Activated naive CD4-positive, alpha-beta T cell treated with anti-CD3 and anti-CD28 coated beads for 36 hours (primary cell): ENCODE measurements at regions of chr17 and their contacts with region 1.

Region 1: DNA sequence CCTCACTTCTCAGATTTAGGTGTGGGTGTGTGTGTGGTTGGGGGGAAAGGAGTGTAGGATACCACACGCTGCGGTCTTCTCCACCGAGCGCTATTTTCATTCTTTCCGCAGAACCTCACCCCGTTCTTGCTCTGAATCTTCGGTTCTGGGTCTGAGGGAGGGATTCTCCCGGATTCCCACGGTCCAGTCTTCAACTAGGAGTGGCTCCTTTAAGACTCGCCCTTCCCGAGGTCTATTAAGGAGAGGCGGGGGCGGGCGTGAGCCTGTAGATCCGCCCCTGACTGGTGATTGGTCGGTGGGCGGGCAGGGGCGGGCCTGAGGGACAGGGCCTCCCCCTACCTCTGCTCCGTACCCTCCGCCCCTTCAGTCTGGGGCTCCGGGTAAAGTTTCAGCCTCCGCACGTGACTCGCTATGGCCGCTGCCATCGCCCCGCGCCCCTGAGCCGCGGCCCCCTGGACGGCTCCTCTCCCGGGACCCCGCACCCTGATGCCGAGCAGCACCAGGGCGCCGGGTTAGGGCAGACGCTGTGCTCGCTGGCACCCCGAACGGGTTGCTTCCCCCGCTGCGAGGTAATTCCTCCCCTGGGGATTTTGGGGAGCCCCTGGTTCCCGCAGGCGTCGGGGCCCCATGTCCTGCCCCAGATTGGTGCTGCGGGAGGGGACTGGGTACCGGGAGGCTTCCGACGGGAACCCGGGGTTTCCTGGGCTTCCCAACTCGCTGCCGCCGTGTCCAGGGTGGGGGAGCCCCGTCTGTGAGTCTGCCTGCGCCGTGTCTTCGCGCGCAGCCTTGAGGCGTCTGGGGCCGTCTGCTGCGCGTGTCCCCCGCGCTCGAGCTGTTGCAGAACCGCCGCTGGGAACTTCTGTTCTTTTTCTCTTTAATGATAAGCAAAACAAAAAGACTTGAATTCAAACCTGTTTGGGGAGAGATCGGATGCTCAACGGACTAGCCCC is 9.2 kb downstream of the RARA start:
- DNase-seq: peak; percentile 94
- H3K4me3 Mint-ChIP-seq: peak overlapping the region; percentile 85
- H3K27ac Mint-ChIP-seq: peak overlapping the region; percentile 90
- H3K4me1 Mint-ChIP-seq: peaks cover 75% of the 10 kb centered on the region
- H3K27me3 Mint-ChIP-seq: no peaks in the 10 kb centered on the region

Region 2: GRCh38 chr17:40219073-40219860 is 98.9 kb before region 1 on chr17 and contains the start of gene WIPF2:
- CTCF ChIA-PET with region 1: interaction called, 3 read pairs
- intact Hi-C with region 1: loop called (anchors 1 kb)
- DNase-seq: peak; percentile 99
- H3K4me3 Mint-ChIP-seq: peak within 1 kb of the TSS; percentile 82
- H3K27ac Mint-ChIP-seq: peak within 1 kb of the TSS; percentile 95
- H3K4me1 Mint-ChIP-seq: peaks cover 24% of the 10 kb centered on the region
- H3K27me3 Mint-ChIP-seq: no peaks in the 10 kb centered on the region
- total RNA-seq, gene WIPF2: 12.3 to 13.0 TPM

Region 3: DNA sequence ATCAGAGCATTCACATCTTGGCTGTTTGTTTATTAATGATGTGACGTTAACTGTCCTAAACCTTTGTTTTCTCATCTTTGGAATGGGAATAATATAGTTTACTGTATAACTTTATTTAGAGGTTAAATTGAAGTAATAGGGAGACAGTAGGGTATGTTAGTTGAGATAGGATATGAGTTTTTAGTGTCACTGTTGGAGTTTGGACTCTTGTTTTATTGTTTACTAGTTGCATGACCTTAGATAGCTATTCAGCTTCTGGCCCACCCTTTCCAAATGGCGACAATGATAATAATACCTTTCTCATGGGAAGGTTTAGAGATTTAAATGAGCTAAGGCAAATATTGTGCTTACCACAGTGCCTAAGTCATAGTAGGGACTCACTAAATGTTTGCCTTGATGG is 58.6 kb before region 1 on chr17:
- CTCF ChIA-PET with region 1: no interaction called
- intact Hi-C with region 1: no loop called
- DNase-seq: no peak
- H3K4me3 Mint-ChIP-seq: no peak overlapping the region
- H3K27ac Mint-ChIP-seq: no peak overlapping the region
- H3K4me1 Mint-ChIP-seq: peaks cover 10% of the 10 kb centered on the region
- H3K27me3 Mint-ChIP-seq: no peaks in the 10 kb centered on the region

Region 4: GRCh38 chr17:40303009-40303657 is 15.0 kb before region 1 on chr17:
- CTCF ChIA-PET with region 1: interaction called, 55 read pairs
- intact Hi-C with region 1: no loop called
- DNase-seq: peak; percentile 61
- H3K4me3 Mint-ChIP-seq: no peak overlapping the region
- H3K27ac Mint-ChIP-seq: no peak overlapping the region
- H3K4me1 Mint-ChIP-seq: peaks cover 10% of the 10 kb centered on the region
- H3K27me3 Mint-ChIP-seq: no peaks in the 10 kb centered on the region

Region 5: DNA sequence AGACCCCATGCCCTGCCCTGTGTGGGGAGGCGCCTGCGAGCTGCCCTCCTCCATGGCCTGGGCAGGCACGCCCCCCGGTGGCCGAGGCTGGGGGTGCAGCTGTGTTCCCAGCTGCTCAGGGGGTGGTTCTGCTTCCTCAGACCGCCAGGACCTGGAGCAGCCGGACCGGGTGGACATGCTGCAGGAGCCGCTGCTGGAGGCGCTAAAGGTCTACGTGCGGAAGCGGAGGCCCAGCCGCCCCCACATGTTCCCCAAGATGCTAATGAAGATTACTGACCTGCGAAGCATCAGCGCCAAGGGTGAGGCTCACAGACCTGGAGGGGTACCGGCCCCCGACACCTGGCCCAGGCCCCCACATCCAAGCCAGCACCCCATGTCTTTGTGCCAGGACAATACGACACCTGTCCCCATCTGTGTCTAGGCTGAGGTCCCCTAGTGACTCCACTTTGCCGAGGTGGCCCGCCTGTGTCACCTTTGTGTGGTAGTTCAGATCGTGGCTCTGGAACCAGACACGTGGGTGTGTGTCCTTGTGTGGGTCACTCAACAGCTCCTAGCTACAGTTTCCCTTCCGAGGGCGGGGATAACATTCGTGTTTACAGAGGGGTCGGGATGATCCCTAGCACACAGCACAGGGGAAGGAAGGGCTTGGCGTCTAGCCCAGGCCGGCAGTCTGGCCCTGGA is 37.1 kb after region 1 on chr17:
- CTCF ChIA-PET with region 1: interaction called, 29 read pairs
- intact Hi-C with region 1: no loop called
- DNase-seq: peak; percentile 82
- H3K4me3 Mint-ChIP-seq: no peak overlapping the region
- H3K27ac Mint-ChIP-seq: no peak overlapping the region
- H3K4me1 Mint-ChIP-seq: peaks cover 9% of the 10 kb centered on the region
- H3K27me3 Mint-ChIP-seq: peaks cover 2% of the 10 kb centered on the region

Region 6: DNA sequence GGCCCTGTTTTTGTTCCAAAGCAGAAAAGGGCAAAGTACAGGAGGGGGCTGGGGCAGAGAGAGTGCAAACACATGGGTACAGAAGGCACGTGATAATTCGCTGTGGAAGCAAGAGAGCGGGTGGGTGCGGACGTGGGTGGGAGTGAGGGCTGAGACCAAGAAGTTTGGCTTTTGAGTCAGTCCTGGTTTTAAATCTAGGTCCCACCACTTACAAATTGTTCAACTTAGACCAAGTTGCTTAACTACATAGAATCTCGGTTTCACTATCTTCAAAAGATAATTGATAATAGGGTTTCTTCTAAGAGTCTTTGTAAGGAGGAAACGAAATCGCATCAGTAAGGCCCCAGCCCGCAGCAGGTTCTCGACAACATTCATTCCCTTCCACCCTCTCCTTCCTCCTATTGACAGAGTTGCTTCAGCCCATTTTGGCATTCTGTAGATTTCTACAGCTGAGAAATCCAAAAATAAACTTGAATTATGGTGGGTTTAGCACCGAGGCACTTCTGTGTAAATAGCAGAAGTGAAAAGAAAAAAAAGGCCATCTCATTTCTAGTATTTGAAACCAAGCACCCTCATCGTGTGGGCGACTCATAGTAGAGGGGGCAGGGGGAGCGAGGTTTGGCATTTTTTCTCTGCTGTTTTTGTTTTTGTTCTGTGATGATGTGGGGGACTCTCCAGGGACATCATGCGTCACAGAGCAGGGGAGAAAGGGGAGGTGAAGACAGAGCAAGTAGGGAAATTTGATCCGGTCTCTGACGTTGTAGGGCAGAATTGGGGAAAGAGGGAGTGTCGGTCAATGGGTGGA is 280.7 kb after region 1 on chr17:
- CTCF ChIA-PET with region 1: no interaction called
- intact Hi-C with region 1: loop called (anchors 5 kb)
- DNase-seq: peak; percentile 90
- H3K4me3 Mint-ChIP-seq: peak overlapping the region; percentile 67
- H3K27ac Mint-ChIP-seq: peak overlapping the region; percentile 98
- H3K4me1 Mint-ChIP-seq: peaks cover 95% of the 10 kb centered on the region
- H3K27me3 Mint-ChIP-seq: no peaks in the 10 kb centered on the region